Heart left ventricle (tissue), 16 donors: ENCODE measurements at regions of chr12 and their contacts with region 1.

Region 1: GRCh38 chr12:124694846-124695497 is 127.6 kb upstream of the NCOR2 start:
- DNase-seq: peak in 4 of 5 donors; percentile 75 to 86 (median 82)
- ATAC-seq: peak; percentile 65 to 89 (median 79)
- H3K4me3 ChIP-seq: peak overlapping the region in 1 of 12 donors; percentile 17
- H3K27ac ChIP-seq: peak overlapping the region; percentile 11 to 89 (median 72)
- H3K4me1 ChIP-seq: peaks cover 0 to 42% (median 24%) of the 10 kb centered on the region in 12 donors
- H3K27me3 ChIP-seq: no peaks in the 10 kb centered on the region
- CTCF ChIP-seq: peak in 4 of 12 donors; percentile 12 to 23 (median 12)
- POLR2A ChIP-seq: no peak

Region 2: GRCh38 chr12:124388679-124389536 is 306.1 kb before region 1 on chr12:
- intact Hi-C with region 1: loop called in 1 of 10 experiments (anchors 10 kb)
- DNase-seq: peak; percentile 89 to 93 (median 93)
- ATAC-seq: peak; percentile 21 to 67 (median 59)
- H3K4me3 ChIP-seq: peak overlapping the region; percentile 33 to 81 (median 64)
- H3K27ac ChIP-seq: peak overlapping the region; percentile 73 to 99 (median 96)
- H3K4me1 ChIP-seq: peaks cover 23 to 98% (median 90%) of the 10 kb centered on the region in 12 donors
- H3K27me3 ChIP-seq: no peaks in the 10 kb centered on the region
- CTCF ChIP-seq: peak in 3 of 12 donors; percentile 9 to 34 (median 22)
- POLR2A ChIP-seq: peak in 1 of 2 donors; percentile 52

Region 3: DNA sequence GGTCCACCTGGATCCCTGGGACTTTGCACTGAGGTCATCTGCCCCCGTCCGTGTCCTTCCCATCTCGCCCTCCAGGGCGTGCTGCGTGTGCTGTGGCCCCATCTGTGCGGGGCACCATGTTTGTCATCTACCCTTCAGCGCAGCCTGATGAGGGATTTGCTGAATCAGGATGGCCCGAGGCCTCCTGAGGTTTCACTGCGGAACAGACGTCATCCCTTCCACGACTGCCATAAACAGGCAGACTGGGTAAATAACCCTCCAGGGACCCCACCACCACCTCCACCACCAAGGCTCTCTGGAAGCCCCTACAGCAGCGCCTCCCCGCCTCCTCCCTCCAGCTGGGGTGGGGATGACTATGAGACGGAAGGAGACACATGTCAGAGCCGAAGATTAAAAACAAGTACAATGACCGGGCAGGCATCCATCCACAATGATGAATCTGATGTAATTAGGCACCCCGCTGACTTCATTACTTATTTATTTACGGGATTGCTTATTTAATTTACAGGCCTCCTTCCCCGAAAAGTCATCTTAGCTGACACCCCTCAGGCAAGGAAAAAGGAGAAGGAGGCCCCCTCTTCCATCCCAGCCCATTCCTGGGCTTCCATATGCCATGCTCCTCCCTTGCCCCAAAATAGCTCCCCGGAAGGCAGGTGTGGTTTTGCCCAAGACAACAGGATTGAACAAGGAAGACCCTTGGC is 167.0 kb before region 1 on chr12:
- intact Hi-C with region 1: no loop called
- DNase-seq: peak in 4 of 5 donors; percentile 48 to 74 (median 59)
- ATAC-seq: peak in 3 of 4 donors; percentile 11 to 59 (median 57)
- H3K4me3 ChIP-seq: no peak overlapping the region
- H3K27ac ChIP-seq: peak overlapping the region in 8 of 12 donors; percentile 9 to 57 (median 40)
- H3K4me1 ChIP-seq: peaks cover 0 to 62% (median 38%) of the 10 kb centered on the region in 12 donors
- H3K27me3 ChIP-seq: no peaks in the 10 kb centered on the region
- CTCF ChIP-seq: no peak
- POLR2A ChIP-seq: no peak

Region 4: GRCh38 chr12:124745891-124746570 is 51.1 kb after region 1 on chr12:
- intact Hi-C with region 1: loop called in 1 of 10 experiments (anchors 5 kb)
- DNase-seq: peak; percentile 94 to 96 (median 96)
- ATAC-seq: peak; percentile 92 to 97 (median 96)
- H3K4me3 ChIP-seq: peak overlapping the region in 4 of 12 donors; percentile 16 to 20 (median 18)
- H3K27ac ChIP-seq: peak overlapping the region; percentile 67 to 93 (median 85)
- H3K4me1 ChIP-seq: peaks cover 4 to 34% (median 13%) of the 10 kb centered on the region in 12 donors
- H3K27me3 ChIP-seq: no peaks in the 10 kb centered on the region
- CTCF ChIP-seq: no peak
- POLR2A ChIP-seq: peak in 1 of 2 donors; percentile 22

Region 5: GRCh38 chr12:124828264-124829007 is 133.5 kb after region 1 on chr12:
- intact Hi-C with region 1: no loop called
- DNase-seq: no peak
- ATAC-seq: peak in 1 of 4 donors; percentile 49
- H3K4me3 ChIP-seq: no peak overlapping the region
- H3K27ac ChIP-seq: no peak overlapping the region
- H3K4me1 ChIP-seq: peaks cover 0 to 16% (median 1%) of the 10 kb centered on the region in 12 donors
- H3K27me3 ChIP-seq: no peaks in the 10 kb centered on the region
- CTCF ChIP-seq: no peak
- POLR2A ChIP-seq: no peak